ENCODE measurements at regions of chr6 and their contacts with region 1.

Region 1: GRCh38 chr6:130409418-130410100 is 43.7 kb downstream of the TMEM200A start:
- DNase-seq: no peak
- H3K4me3 ChIP-seq: no peak overlapping the region
- H3K4me3 Mint-ChIP-seq: no peak overlapping the region
- H3K27ac ChIP-seq: no peak overlapping the region
- H3K27ac Mint-ChIP-seq: no peak overlapping the region
- H3K4me1 ChIP-seq: no peaks in the 10 kb centered on the region
- H3K4me1 Mint-ChIP-seq: peaks cover 0 to 13% (median 7%) of the 10 kb centered on the region in 4 donors
- H3K27me3 ChIP-seq: no peaks in the 10 kb centered on the region
- H3K27me3 Mint-ChIP-seq: no peaks in the 10 kb centered on the region

Region 2: DNA sequence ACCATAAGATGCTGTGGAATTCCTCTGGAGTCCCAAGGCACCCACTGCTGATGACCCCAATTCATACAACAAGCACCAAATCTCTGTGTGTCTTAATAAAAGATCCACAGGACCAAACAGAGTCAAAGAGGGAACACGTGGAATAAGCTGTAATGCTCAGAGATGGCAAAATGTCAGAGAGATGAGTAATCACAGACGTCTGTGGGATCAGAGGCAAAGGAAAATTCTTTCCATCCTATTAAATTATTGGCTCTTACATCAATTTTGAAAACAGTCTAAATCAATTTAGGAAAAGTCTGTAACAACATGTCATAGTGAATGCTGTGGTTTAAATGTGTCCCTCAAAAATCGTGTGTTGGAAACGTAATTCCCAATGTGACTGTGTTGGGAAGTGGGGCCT is 169.3 kb before region 1 on chr6:
- CTCF ChIA-PET with region 1: no interaction called
- POLR2A ChIA-PET with region 1: no interaction called
- intact Hi-C with region 1: no loop called
- DNase-seq: no peak
- H3K4me3 ChIP-seq: no peak overlapping the region
- H3K4me3 Mint-ChIP-seq: no peak overlapping the region
- H3K27ac ChIP-seq: no peak overlapping the region
- H3K27ac Mint-ChIP-seq: no peak overlapping the region
- H3K4me1 ChIP-seq: no peaks in the 10 kb centered on the region
- H3K4me1 Mint-ChIP-seq: peaks cover 0 to 2% (median 0%) of the 10 kb centered on the region in 4 donors
- H3K27me3 ChIP-seq: no peaks in the 10 kb centered on the region
- H3K27me3 Mint-ChIP-seq: no peaks in the 10 kb centered on the region

Region 3: GRCh38 chr6:130525408-130525807 is 115.8 kb after region 1 on chr6:
- CTCF ChIA-PET with region 1: no interaction called
- POLR2A ChIA-PET with region 1: no interaction called
- intact Hi-C with region 1: loop called (anchors 10 kb)
- DNase-seq: peak in 3 of 5 donors; percentile 11 to 16 (median 16)
- H3K4me3 ChIP-seq: no peak overlapping the region
- H3K4me3 Mint-ChIP-seq: peak overlapping the region in 6 of 8 donors; percentile 10 to 82 (median 38)
- H3K27ac ChIP-seq: peak overlapping the region; percentile 12
- H3K27ac Mint-ChIP-seq: peak overlapping the region in 6 of 7 donors; percentile 69 to 95 (median 89)
- H3K4me1 ChIP-seq: peaks cover 27% of the 10 kb centered on the region
- H3K4me1 Mint-ChIP-seq: peaks cover 30 to 54% (median 40%) of the 10 kb centered on the region in 4 donors
- H3K27me3 ChIP-seq: no peaks in the 10 kb centered on the region
- H3K27me3 Mint-ChIP-seq: no peaks in the 10 kb centered on the region

Region 4: GRCh38 chr6:131316654-131317053 is 907.1 kb after region 1 on chr6:
- CTCF ChIA-PET with region 1: no interaction called
- POLR2A ChIA-PET with region 1: no interaction called
- intact Hi-C with region 1: no loop called
- DNase-seq: no peak
- H3K4me3 ChIP-seq: no peak overlapping the region
- H3K4me3 Mint-ChIP-seq: no peak overlapping the region
- H3K27ac ChIP-seq: no peak overlapping the region
- H3K27ac Mint-ChIP-seq: peak overlapping the region in 1 of 7 donors; percentile 43
- H3K4me1 ChIP-seq: no peaks in the 10 kb centered on the region
- H3K4me1 Mint-ChIP-seq: no peaks in the 10 kb centered on the region
- H3K27me3 ChIP-seq: no peaks in the 10 kb centered on the region
- H3K27me3 Mint-ChIP-seq: no peaks in the 10 kb centered on the region

Measured in CD4-positive, alpha-beta memory T cell (primary cell).